ENCODE measurements at regions of chr6 and their contacts with region 1.

Region 1: DNA sequence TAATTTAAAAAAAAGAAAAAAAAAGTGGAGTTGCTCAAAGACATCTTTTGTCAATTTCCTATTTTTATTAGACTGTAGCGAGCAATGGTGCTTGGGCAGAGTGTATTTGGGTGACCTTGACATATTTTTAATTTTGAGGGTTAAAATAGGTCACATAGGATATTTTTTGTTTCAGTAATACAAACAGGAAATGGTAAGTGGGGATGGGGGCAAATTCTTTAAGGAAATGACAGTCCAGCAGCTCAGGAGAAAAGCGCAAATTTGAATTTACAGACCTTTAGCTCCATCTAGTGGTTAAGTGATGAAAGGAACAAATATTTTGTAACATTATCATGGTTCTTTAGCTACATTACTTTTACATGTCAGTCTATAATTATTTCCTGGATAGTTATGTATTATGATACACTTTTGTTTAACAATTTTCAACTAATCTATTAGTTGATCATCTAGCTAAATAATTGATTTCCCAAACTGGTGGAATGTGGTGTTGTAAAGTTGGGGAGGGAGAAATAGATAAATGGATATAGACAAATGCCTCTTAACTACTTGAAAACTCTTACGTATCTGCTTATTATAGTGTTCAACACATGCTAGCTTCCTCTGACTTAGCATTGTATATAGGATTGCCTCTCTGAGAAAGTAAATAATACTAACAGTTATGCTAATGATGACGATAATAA is 10.0 kb downstream of the CITED2 start:
- DNase-seq: peak in 2 of 5 donors; percentile 60 to 63
- H3K4me3 ChIP-seq: no peak overlapping the region
- H3K4me3 Mint-ChIP-seq: peak overlapping the region in 6 of 7 donors; percentile 4 to 43 (median 26)
- H3K27ac ChIP-seq: no peak overlapping the region
- H3K27ac Mint-ChIP-seq: peak overlapping the region in 4 of 8 donors; percentile 12 to 77 (median 62)
- H3K4me1 ChIP-seq: peaks cover 14% of the 10 kb centered on the region
- H3K4me1 Mint-ChIP-seq: peaks cover 23 to 61% (median 45%) of the 10 kb centered on the region in 3 donors
- H3K27me3 ChIP-seq: no peaks in the 10 kb centered on the region
- H3K27me3 Mint-ChIP-seq: no peaks in the 10 kb centered on the region

Region 2: DNA sequence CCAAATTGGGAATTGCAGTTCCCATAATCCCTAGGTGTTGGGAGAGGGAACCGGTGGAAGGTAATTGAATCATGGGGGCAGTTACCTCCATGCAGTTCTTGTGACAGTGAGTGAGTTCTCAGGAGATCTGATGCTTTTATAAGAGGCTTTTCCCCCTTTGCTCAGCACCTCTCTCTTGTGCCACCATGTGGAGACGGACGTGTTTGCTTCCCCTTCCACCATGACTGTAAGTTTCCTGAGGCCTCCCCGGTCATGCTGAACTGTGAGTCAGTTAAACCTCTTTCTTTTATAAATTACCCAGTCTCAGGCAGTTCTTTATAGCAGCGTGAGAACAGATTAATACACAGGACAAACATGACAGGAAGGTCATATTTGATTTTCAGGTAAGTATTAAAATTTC is 254.9 kb before region 1 on chr6:
- CTCF ChIA-PET with region 1: interaction called, 17 read pairs
- POLR2A ChIA-PET with region 1: interaction called, 3 read pairs
- DNase-seq: peak in 1 of 5 donors; percentile 48
- H3K4me3 ChIP-seq: no peak overlapping the region
- H3K4me3 Mint-ChIP-seq: peak overlapping the region in 1 of 7 donors; percentile 40
- H3K27ac ChIP-seq: no peak overlapping the region
- H3K27ac Mint-ChIP-seq: peak overlapping the region in 6 of 8 donors; percentile 15 to 57 (median 32)
- H3K4me1 ChIP-seq: peaks cover 47% of the 10 kb centered on the region
- H3K4me1 Mint-ChIP-seq: peaks cover 49 to 59% (median 58%) of the 10 kb centered on the region in 3 donors
- H3K27me3 ChIP-seq: no peaks in the 10 kb centered on the region
- H3K27me3 Mint-ChIP-seq: peaks cover 0 to 3% of the 10 kb centered on the region in 2 donors

Region 3: GRCh38 chr6:139124887-139125672 is 239.4 kb before region 1 on chr6:
- CTCF ChIA-PET with region 1: interaction called, 19 read pairs
- POLR2A ChIA-PET with region 1: interaction called, 3 read pairs
- DNase-seq: peak; percentile 48 to 88 (median 83)
- H3K4me3 ChIP-seq: peak overlapping the region; percentile 35
- H3K4me3 Mint-ChIP-seq: peak overlapping the region; percentile 42 to 80 (median 67)
- H3K27ac ChIP-seq: peak overlapping the region; percentile 10
- H3K27ac Mint-ChIP-seq: peak overlapping the region; percentile 83 to 97 (median 92)
- H3K4me1 ChIP-seq: peaks cover 49% of the 10 kb centered on the region
- H3K4me1 Mint-ChIP-seq: peaks cover 40 to 54% (median 49%) of the 10 kb centered on the region in 3 donors
- H3K27me3 ChIP-seq: no peaks in the 10 kb centered on the region
- H3K27me3 Mint-ChIP-seq: no peaks in the 10 kb centered on the region

Region 4: DNA sequence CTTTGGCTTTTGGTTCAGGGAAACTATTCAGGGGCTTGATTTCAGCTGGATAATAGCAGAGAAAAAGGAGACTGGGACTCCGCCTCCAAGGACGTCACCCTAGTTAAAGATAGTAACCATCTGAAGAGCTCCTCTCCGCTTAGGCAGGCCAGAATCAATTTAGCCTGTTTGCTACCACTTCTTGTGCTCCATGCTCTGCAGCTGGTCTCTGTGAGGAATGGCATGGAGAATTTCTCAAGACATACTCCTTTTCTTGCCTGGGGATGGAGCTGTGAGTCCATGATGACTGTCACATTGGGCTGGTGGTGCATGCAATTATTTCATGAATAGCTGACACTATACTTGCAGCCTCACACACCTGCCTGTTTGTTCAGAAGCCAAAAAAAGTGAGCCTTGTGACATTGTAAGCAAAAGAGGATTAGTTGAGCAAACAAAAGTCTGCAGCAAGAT is 134.0 kb before region 1 on chr6:
- CTCF ChIA-PET with region 1: interaction called, 10 read pairs
- POLR2A ChIA-PET with region 1: interaction called, 4 read pairs
- DNase-seq: no peak
- H3K4me3 ChIP-seq: no peak overlapping the region
- H3K4me3 Mint-ChIP-seq: no peak overlapping the region
- H3K27ac ChIP-seq: no peak overlapping the region
- H3K27ac Mint-ChIP-seq: peak overlapping the region in 3 of 8 donors; percentile 3 to 73 (median 36)
- H3K4me1 ChIP-seq: no peaks in the 10 kb centered on the region
- H3K4me1 Mint-ChIP-seq: peaks cover 0 to 10% (median 10%) of the 10 kb centered on the region in 3 donors
- H3K27me3 ChIP-seq: no peaks in the 10 kb centered on the region
- H3K27me3 Mint-ChIP-seq: no peaks in the 10 kb centered on the region

Region 5: GRCh38 chr6:139313229-139313628 is 51.2 kb before region 1 on chr6:
- CTCF ChIA-PET with region 1: no interaction called
- POLR2A ChIA-PET with region 1: no interaction called
- DNase-seq: no peak
- H3K4me3 ChIP-seq: no peak overlapping the region
- H3K4me3 Mint-ChIP-seq: no peak overlapping the region
- H3K27ac ChIP-seq: no peak overlapping the region
- H3K27ac Mint-ChIP-seq: no peak overlapping the region
- H3K4me1 ChIP-seq: no peaks in the 10 kb centered on the region
- H3K4me1 Mint-ChIP-seq: peaks cover 8 to 23% (median 18%) of the 10 kb centered on the region in 3 donors
- H3K27me3 ChIP-seq: no peaks in the 10 kb centered on the region
- H3K27me3 Mint-ChIP-seq: peaks cover 0 to 2% of the 10 kb centered on the region in 2 donors

Region 6: DNA sequence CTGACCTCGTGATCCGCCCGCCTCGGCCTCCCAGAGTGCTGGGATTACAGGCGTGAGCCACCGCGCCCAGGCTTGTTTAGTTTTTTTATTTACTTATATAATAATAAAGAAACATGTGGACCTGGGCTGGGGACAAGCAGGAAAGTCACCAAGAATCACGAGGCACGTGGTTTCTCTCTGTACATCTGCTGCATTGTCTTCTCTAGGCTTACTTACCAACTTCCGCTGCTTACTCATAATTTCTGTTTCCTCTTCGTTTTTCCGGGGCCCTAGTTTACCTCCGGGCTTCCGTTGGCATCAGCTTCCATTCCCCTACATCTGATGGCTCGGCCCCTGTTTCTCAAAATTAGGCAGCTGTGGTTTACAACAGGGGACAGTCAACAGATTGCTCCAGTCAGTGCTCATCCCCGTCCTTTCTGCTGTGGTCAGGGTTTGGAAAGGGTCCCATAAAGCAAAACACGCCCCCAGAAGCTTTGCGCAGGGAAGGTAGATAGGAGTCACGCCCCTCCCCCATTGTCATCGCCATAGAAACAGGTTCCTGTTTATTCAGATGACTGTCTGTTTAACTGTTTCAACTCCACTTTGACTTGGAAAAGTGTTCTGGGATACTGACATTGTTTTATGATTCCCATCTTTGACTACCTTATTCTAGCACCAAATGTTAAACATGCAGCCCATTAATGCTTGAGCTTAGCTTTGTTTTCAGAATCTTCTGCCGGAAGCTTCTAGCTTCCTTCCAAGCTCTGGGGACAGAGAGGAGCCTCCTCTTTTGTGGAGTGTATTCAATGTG is 40.7 kb before region 1 on chr6:
- CTCF ChIA-PET with region 1: interaction called, 10 read pairs
- POLR2A ChIA-PET with region 1: interaction called, 5 read pairs
- DNase-seq: peak; percentile 63 to 90 (median 85)
- H3K4me3 ChIP-seq: peak overlapping the region; percentile 86
- H3K4me3 Mint-ChIP-seq: peak overlapping the region; percentile 69 to 94 (median 88)
- H3K27ac ChIP-seq: peak overlapping the region; percentile 94
- H3K27ac Mint-ChIP-seq: peak overlapping the region; percentile 95 to 99 (median 98)
- H3K4me1 ChIP-seq: peaks cover 32% of the 10 kb centered on the region
- H3K4me1 Mint-ChIP-seq: peaks cover 34 to 46% (median 44%) of the 10 kb centered on the region in 3 donors
- H3K27me3 ChIP-seq: no peaks in the 10 kb centered on the region
- H3K27me3 Mint-ChIP-seq: peaks cover 0 to 2% of the 10 kb centered on the region in 2 donors

Measured in CD8-positive, alpha-beta memory T cell (primary cell).